Esophagus muscularis mucosa (tissue), 4 donors: ENCODE measurements at regions of chr1 and their contacts with region 1.

Region 1: GRCh38 chr1:183932412-183932811 is 105.1 kb downstream of the COLGALT2 start:
- DNase-seq: no peak
- H3K4me3 ChIP-seq: peak overlapping the region; percentile 12 to 29 (median 18)
- H3K27ac ChIP-seq: peak overlapping the region; percentile 43 to 58 (median 56)
- H3K4me1 ChIP-seq: peaks cover 10 to 27% (median 21%) of the 10 kb centered on the region in 4 donors
- H3K27me3 ChIP-seq: no peaks in the 10 kb centered on the region
- CTCF ChIP-seq: no peak
- EP300 ChIP-seq: no peak
- POLR2A ChIP-seq: no peak

Region 2: DNA sequence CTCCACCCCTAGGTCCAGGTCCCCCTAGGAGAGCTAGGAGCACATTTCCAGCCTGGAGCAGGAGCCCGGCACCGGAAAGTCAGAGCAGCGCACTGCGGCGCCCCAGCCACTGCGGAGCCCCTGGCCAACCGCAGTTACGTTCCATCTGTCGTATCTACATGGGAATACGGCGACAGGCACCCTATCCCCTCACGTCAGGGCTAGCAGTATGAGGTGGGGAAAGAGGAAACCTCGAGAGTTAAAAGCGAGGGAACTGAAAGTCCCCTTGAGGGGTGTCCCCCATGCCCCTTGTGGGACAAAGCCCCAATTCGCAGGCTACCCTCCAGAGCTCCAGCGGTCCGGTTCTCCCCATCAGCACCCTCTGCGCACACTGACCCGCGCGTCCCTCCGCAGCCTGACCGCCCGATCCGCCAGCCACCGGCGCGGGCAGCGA is 104.1 kb after region 1 on chr1:
- intact Hi-C with region 1: loop called (anchors 10 kb)
- DNase-seq: no peak
- H3K4me3 ChIP-seq: peak overlapping the region; percentile 60 to 86 (median 74)
- H3K27ac ChIP-seq: peak overlapping the region; percentile 58 to 76 (median 68)
- H3K4me1 ChIP-seq: peaks cover 7 to 23% (median 19%) of the 10 kb centered on the region in 4 donors
- H3K27me3 ChIP-seq: peaks cover 0 to 20% (median 4%) of the 10 kb centered on the region in 4 donors
- CTCF ChIP-seq: no peak
- EP300 ChIP-seq: no peak
- POLR2A ChIP-seq: no peak